Esophagus muscularis mucosa (tissue), 4 donors: ENCODE measurements at regions of chr10 and their contacts with region 1.

Region 1: DNA sequence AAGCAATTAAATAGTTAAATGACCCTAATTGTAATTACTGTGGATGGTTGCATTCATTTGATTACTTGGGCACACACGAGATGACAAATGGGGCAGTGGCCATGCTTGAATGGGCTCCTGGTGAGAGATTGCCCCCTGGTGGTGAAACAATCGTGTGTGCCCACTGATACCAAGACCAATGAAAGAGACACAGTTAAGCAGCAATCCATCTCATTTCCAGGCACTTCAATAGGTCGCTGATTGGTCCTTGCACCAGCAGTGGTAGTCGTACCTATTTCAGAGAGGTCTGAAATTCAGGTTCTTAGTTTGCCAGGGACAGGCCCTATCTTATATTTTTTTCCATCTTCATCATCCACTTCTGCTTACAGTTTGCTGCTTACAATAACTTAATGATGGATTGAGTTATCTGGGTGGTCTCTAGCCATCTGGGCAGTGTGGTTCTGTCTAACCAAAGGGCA is 8.3 kb downstream of the PCBD1 start:
- DNase-seq: peak; percentile 95
- H3K4me3 ChIP-seq: no peak overlapping the region
- H3K27ac ChIP-seq: no peak overlapping the region
- H3K4me1 ChIP-seq: peaks cover 0 to 3% (median 0%) of the 10 kb centered on the region in 4 donors
- H3K27me3 ChIP-seq: no peaks in the 10 kb centered on the region
- CTCF ChIP-seq: peak; percentile 89 to 93 (median 91)
- EP300 ChIP-seq: no peak
- POLR2A ChIP-seq: no peak

Region 2: DNA sequence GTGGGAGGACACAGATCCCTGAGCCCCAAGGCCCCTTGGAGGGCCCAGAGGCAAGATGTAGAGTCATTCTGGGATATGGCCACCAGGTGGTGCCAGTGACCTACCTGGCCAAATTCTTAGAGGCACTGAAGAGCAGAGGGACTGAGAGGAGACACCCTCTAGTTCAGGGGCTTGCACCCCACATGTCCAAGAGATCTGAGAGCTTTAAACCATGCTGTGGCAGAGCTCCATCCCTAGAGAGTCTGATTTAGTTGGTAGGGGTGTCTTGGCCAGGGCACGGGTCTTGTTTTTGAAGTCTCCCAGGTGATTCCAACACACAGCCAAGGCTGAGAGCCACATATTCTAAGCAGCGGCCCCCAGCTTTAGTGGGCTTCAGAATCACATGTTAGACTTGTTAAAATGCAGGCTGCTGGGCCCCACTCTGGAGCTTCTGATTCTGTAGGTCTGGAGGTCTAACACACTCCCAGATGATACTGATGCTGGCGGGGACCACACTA is 330.1 kb before region 1 on chr10:
- intact Hi-C with region 1: loop called (anchors 5 kb)
- DNase-seq: peak; percentile 95
- H3K4me3 ChIP-seq: no peak overlapping the region
- H3K27ac ChIP-seq: no peak overlapping the region
- H3K4me1 ChIP-seq: peaks cover 4 to 21% (median 8%) of the 10 kb centered on the region in 4 donors
- H3K27me3 ChIP-seq: no peaks in the 10 kb centered on the region
- CTCF ChIP-seq: peak; percentile 88 to 92 (median 91)
- EP300 ChIP-seq: no peak
- POLR2A ChIP-seq: no peak

Region 3: GRCh38 chr10:70815504-70816219 is 64.4 kb before region 1 on chr10 and contains the start of gene SGPL1:
- intact Hi-C with region 1: loop called (anchors 2 kb)
- DNase-seq: peak; percentile 92
- H3K4me3 ChIP-seq: peak within 1 kb of the TSS; percentile 83 to 97 (median 86)
- H3K27ac ChIP-seq: peak within 1 kb of the TSS; percentile 92 to 98 (median 96)
- H3K4me1 ChIP-seq: peaks cover 9 to 26% (median 18%) of the 10 kb centered on the region in 4 donors
- H3K27me3 ChIP-seq: no peaks in the 10 kb centered on the region
- CTCF ChIP-seq: peak; percentile 98 to 100 (median 98)
- EP300 ChIP-seq: no peak
- POLR2A ChIP-seq: no peak
- total RNA-seq, gene SGPL1: 12.9 to 31.0 (median 21.3) TPM